WTC11 (cell line): ENCODE measurements at regions of chr10 and their contacts with region 1.

Region 1: GRCh38 chr10:119750391-119751230 is 24.8 kb downstream of the INPP5F start:
- DNase-seq: peak; percentile 71
- ATAC-seq: peak; percentile 96
- H3K4me3 Mint-ChIP-seq: no peak overlapping the region
- H3K27ac Mint-ChIP-seq: no peak overlapping the region
- H3K4me1 Mint-ChIP-seq: peaks cover 20% of the 10 kb centered on the region
- H3K27me3 Mint-ChIP-seq: no peaks in the 10 kb centered on the region
- CTCF ChIP-seq: peak; percentile 62

Region 2: DNA sequence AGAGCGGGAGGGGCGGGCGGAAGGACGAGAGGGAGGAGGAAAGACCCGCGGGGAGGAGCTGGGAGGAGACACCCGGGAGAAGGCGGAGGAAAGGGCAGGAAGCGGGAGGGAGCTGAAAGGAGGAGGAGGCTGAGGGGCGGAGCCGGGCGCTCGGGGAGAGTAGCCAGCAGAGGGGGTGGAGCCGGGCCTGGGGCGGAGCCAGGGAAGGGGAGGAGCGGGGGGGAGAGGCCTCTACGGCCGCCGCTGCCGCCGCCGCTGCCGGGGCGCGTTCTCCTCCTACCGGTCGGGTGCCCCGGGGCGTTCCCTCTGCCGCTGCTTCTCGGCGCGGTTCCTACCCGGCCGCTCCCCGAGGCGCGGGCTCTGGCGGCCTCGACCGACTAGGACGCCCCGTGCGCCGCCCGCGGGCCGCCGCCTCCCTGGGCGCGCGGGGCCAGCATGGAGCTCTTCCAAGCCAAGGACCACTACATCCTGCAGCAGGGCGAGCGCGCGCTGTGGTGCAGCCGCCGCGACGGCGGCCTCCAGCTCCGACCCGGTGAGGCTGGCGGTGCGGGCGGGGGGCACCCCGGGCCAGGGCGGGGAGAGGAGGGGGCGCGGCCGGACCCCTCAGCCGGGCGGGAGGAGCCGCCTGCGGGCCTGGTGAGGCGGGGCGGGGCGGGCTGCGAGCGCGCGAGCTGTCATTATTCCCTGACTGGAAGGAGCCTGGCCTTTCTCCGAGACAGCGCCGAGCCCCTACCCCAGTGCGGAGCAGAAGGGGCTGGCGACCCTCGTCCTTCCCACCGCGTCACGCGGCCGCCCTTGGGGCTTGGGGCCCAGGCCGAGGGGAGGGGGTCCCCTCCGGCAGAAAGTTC is 24.6 kb before region 1 on chr10 and contains the start of gene INPP5F:
- CTCF ChIA-PET with region 1: interaction called, 16 read pairs
- POLR2A ChIA-PET with region 1: interaction called, 5 read pairs
- DNase-seq: peak; percentile 99
- ATAC-seq: peak; percentile 96
- H3K4me3 Mint-ChIP-seq: peak within 1 kb of the TSS; percentile 82
- H3K27ac Mint-ChIP-seq: peak within 1 kb of the TSS; percentile 75
- H3K4me1 Mint-ChIP-seq: peaks cover 30% of the 10 kb centered on the region
- H3K27me3 Mint-ChIP-seq: no peaks in the 10 kb centered on the region
- CTCF ChIP-seq: no peak
- total RNA-seq, gene INPP5F: 79.3 to 83.3 TPM (median 80.6 TPM) in 3 replicates

Region 3: GRCh38 chr10:119782981-119783664 is 32.5 kb after region 1 on chr10:
- CTCF ChIA-PET with region 1: interaction called, 10 read pairs
- POLR2A ChIA-PET with region 1: no interaction called
- DNase-seq: no peak
- ATAC-seq: no peak
- H3K4me3 Mint-ChIP-seq: no peak overlapping the region
- H3K27ac Mint-ChIP-seq: no peak overlapping the region
- H3K4me1 Mint-ChIP-seq: peaks cover 37% of the 10 kb centered on the region
- H3K27me3 Mint-ChIP-seq: no peaks in the 10 kb centered on the region
- CTCF ChIP-seq: no peak

Region 4: DNA sequence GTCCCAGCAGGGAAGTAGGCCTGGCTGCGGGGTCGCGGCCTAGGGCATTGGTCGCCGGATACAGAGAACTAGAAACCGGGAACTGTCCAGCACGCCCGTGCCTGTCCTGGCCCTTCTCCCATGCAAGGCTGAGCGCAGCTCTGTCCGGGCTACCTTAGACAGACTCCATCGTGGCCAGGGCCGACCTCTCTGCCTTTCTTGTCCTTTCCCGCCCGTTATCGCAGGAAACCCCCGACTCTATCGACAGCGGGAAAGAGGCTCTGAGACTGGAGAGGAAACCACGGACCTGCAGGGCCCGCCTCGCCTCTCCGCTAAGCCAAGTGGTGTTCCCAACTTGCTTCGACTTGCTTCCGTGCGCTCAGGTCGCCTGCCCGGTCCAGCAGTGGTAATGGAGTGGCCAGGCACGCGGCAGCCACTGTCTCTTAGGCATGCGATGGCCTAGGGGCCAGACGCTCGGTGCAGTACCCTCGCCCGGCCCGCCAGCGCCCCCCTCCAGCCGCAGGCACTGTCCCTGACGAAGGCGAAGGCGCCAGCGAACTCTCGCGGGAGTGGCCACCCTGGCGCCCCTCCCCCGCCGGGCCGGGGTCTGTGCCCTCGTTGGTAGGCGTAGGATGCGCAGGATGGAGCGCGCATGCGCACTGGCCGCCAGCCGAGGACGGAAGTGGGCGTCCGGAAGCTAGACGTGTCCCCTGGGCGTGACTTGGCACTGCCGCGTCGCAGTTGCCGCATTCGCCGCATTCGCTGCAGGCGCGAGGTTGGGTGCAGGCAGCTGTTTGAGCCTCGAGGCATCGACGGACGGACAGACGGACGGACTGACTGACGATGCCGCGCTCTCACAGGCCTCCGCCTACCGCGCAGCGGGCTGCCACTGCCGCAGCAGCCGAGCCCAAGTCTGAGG is 67.6 kb after region 1 on chr10:
- CTCF ChIA-PET with region 1: interaction called, 49 read pairs
- POLR2A ChIA-PET with region 1: no interaction called
- DNase-seq: peak; percentile 97
- ATAC-seq: peak; percentile 95
- H3K4me3 Mint-ChIP-seq: peak overlapping the region; percentile 72
- H3K27ac Mint-ChIP-seq: peak overlapping the region; percentile 94
- H3K4me1 Mint-ChIP-seq: peaks cover 32% of the 10 kb centered on the region
- H3K27me3 Mint-ChIP-seq: no peaks in the 10 kb centered on the region
- CTCF ChIP-seq: peak; percentile 44; the same call in 1 of the 2 replicates

Region 5: DNA sequence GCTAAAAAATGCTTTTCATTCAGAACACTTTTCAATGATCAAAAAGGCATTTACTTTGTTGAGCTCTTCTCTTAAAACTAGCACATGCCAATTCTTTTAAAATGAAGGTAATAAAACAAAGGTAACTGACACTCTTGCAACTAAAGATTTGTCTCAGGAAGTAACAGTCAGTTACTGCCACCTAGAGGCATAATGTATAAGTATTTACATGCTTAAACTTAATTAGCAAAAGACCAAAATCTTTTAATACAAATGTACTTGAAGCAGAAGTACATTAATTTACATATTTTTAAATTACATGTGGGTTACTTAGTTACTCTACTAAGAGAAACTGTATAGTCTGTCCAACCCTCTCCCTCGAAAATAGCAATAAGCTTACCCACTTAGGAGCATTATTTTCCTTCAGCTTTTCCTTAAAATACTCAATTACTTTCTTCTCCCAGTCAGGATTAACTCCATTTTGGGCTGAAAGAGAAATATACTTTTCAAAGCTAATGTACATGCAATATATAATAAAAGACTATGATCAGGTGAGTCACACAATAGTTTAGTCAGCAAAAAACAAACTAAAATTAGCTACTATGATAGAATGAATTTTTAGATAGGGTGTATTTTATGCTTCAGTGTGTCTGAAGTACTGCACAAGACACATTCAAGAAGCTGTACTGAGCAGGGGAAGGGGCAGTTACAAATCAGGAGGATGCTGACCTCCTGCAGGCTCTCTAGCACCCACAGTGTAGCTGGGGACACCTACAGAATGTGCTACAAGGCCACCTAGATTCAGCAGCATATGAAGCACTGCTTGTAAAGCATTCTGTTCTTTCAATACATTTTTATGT is 109.0 kb after region 1 on chr10:
- CTCF ChIA-PET with region 1: interaction called, 21 read pairs
- POLR2A ChIA-PET with region 1: no interaction called
- DNase-seq: no peak
- ATAC-seq: no peak
- H3K4me3 Mint-ChIP-seq: no peak overlapping the region
- H3K27ac Mint-ChIP-seq: peak overlapping the region; percentile 61
- H3K4me1 Mint-ChIP-seq: peaks cover 27% of the 10 kb centered on the region
- H3K27me3 Mint-ChIP-seq: no peaks in the 10 kb centered on the region
- CTCF ChIP-seq: 0 out of 2 replicates have a peak, but pooled peaks have one; percentile 34